ENCODE measurements at regions of chr6 and their contacts with region 1.

Region 1: GRCh38 chr6:26122793-26123674 is 35.8 kb downstream of the HFE start:
- DNase-seq: peak; percentile 90 to 99 (median 97)
- H3K4me3 ChIP-seq: peak overlapping the region; percentile 87 to 100 (median 97)
- H3K4me3 Mint-ChIP-seq: peak overlapping the region; percentile 99
- H3K27ac ChIP-seq: peak overlapping the region; percentile 85 to 87
- H3K27ac Mint-ChIP-seq: peak overlapping the region; percentile 97 to 100 (median 99)
- H3K4me1 ChIP-seq: peaks cover 24 to 41% of the 10 kb centered on the region in 2 donors
- H3K4me1 Mint-ChIP-seq: peaks cover 46% of the 10 kb centered on the region
- H3K27me3 ChIP-seq: no peaks in the 10 kb centered on the region
- H3K27me3 Mint-ChIP-seq: peaks cover 0 to 4% (median 0%) of the 10 kb centered on the region in 3 donors
- CTCF ChIP-seq: no peak

Region 2: DNA sequence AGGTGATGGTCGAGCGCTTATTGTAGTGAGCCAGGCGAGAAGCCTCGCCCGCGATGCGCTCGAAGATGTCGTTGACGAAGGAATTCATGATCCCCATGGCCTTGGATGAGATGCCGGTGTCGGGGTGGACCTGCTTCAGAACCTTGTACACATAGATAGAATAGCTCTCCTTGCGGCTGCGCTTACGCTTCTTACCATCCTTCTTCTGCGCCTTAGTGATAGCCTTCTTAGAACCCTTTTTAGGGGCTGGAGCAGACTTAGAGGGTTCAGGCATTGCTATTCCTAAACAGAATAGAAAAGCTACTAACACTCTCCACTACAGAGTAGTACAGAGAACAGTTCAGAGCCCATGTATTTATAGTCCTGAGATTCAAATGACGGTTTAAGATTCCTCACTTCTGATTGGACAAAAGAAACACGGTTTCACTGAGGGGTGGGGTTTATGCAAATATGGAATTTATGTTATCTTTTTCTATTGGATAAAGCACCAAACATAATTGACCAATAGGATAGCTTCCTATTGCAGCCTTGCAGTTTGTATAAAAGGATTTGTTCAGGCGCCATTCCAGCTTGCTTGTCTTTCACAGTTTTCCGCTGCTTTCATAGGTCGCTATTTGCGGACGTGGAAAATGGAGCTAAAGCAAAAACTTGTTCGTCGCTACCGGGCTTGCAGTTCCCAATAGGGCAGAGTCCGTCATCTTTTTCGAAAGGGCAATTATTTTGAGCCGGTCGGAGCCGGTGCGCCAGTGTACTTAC is 79.5 kb before region 1 on chr6:
- intact Hi-C with region 1: loop called in 1 of 2 experiments (anchors 5 kb)
- DNase-seq: peak; percentile 92 to 97 (median 92)
- H3K4me3 ChIP-seq: peak overlapping the region; percentile 79 to 99 (median 80)
- H3K4me3 Mint-ChIP-seq: peak overlapping the region; percentile 87 to 92
- H3K27ac ChIP-seq: peak overlapping the region; percentile 71 to 72
- H3K27ac Mint-ChIP-seq: peak overlapping the region; percentile 91 to 96 (median 95)
- H3K4me1 ChIP-seq: peaks cover 33% of the 10 kb centered on the region in 2 donors
- H3K4me1 Mint-ChIP-seq: peaks cover 20% of the 10 kb centered on the region
- H3K27me3 ChIP-seq: no peaks in the 10 kb centered on the region
- H3K27me3 Mint-ChIP-seq: peaks cover 0 to 5% (median 0%) of the 10 kb centered on the region in 3 donors
- CTCF ChIP-seq: no peak

Region 3: DNA sequence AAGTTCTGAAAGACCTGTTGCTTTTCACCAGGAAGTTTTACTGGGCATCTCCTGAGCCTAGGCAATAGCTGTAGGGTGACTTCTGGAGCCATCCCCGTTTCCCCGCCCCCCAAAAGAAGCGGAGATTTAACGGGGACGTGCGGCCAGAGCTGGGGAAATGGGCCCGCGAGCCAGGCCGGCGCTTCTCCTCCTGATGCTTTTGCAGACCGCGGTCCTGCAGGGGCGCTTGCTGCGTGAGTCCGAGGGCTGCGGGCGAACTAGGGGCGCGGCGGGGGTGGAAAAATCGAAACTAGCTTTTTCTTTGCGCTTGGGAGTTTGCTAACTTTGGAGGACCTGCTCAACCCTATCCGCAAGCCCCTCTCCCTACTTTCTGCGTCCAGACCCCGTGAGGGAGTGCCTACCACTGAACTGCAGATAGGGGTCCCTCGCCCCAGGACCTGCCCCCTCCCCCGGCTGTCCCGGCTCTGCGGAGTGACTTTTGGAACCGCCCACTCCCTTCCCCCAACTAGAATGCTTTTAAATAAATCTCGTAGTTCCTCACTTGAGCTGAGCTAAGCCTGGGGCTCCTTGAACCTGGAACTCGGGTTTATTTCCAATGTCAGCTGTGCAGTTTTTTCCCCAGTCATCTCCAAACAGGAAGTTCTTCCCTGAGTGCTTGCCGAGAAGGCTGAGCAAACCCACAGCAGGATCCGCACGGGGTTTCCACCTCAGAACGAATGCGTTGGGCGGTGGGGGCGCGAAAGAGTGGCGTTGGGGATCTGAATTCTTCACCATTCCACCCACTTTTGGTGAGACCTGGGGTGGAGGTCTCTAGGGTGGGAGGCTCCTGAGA is 35.5 kb before region 1 on chr6 and contains the start of gene HFE:
- intact Hi-C with region 1: no loop called
- DNase-seq: peak; percentile 51 to 80 (median 64)
- H3K4me3 ChIP-seq: peak within 1 kb of the TSS; percentile 62 to 91 (median 70)
- H3K4me3 Mint-ChIP-seq: peak within 1 kb of the TSS; percentile 90 to 91
- H3K27ac ChIP-seq: peak within 1 kb of the TSS; percentile 77 to 85
- H3K27ac Mint-ChIP-seq: peak within 1 kb of the TSS; percentile 82 to 92 (median 88)
- H3K4me1 ChIP-seq: peaks cover 29 to 49% of the 10 kb centered on the region in 2 donors
- H3K4me1 Mint-ChIP-seq: peaks cover 47% of the 10 kb centered on the region
- H3K27me3 ChIP-seq: no peaks in the 10 kb centered on the region
- H3K27me3 Mint-ChIP-seq: peaks cover 0 to 8% (median 7%) of the 10 kb centered on the region in 3 donors
- CTCF ChIP-seq: no peak
- polyA plus RNA-seq, gene HFE: 13.5 to 16.1 (median 14.1) TPM

Region 4: DNA sequence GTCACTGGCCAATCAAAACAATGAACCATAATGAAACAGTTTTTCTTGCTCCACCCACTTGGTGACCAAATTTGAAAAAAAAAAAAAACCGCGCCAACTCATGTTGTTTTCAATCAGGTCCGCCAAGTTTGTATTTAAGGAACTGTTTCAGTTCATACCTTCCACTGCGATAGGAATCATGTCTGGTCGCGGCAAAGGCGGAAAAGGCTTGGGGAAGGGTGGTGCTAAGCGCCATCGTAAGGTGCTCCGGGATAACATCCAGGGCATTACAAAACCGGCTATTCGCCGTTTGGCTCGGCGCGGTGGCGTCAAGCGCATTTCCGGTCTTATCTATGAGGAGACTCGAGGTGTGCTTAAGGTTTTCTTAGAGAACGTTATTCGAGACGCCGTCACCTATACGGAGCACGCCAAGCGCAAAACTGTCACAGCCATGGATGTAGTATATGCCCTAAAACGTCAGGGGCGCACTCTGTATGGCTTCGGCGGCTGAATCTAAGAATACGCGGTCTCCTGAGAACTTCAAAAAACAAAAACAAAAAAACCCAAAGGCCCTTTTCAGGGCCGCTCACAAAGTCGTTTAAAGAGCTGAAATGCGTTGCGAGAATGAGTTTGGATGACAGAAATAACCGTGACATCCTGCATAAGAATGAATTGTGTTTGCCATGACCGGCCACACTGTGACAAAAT is 19.1 kb before region 1 on chr6:
- intact Hi-C with region 1: loop called in 1 of 2 experiments (anchors 1 kb)
- DNase-seq: peak; percentile 85 to 88 (median 87)
- H3K4me3 ChIP-seq: peak overlapping the region; percentile 59 to 89 (median 84)
- H3K4me3 Mint-ChIP-seq: peak overlapping the region; percentile 86 to 87
- H3K27ac ChIP-seq: peak overlapping the region; percentile 80 to 88
- H3K27ac Mint-ChIP-seq: peak overlapping the region; percentile 88 to 96 (median 93)
- H3K4me1 ChIP-seq: peaks cover 13 to 19% of the 10 kb centered on the region in 2 donors
- H3K4me1 Mint-ChIP-seq: peaks cover 15% of the 10 kb centered on the region
- H3K27me3 ChIP-seq: no peaks in the 10 kb centered on the region
- H3K27me3 Mint-ChIP-seq: peaks cover 0 to 3% (median 2%) of the 10 kb centered on the region in 3 donors
- CTCF ChIP-seq: peak; percentile 67

Region 5: GRCh38 chr6:26156076-26156849 is 33.2 kb after region 1 on chr6:
- intact Hi-C with region 1: loop called (anchors 2 to 5 kb)
- DNase-seq: peak; percentile 82 to 89 (median 87)
- H3K4me3 ChIP-seq: peak overlapping the region; percentile 58 to 88 (median 70)
- H3K4me3 Mint-ChIP-seq: peak overlapping the region; percentile 92 to 93
- H3K27ac ChIP-seq: peak overlapping the region; percentile 87 to 88
- H3K27ac Mint-ChIP-seq: peak overlapping the region; percentile 92 to 100 (median 98)
- H3K4me1 ChIP-seq: peaks cover 38 to 40% of the 10 kb centered on the region in 2 donors
- H3K4me1 Mint-ChIP-seq: peaks cover 36% of the 10 kb centered on the region
- H3K27me3 ChIP-seq: no peaks in the 10 kb centered on the region
- H3K27me3 Mint-ChIP-seq: no peaks in the 10 kb centered on the region
- CTCF ChIP-seq: no peak

Region 6: GRCh38 chr6:26196846-26197648 is 74.0 kb after region 1 on chr6:
- intact Hi-C with region 1: loop called in 1 of 2 experiments (anchors 10 kb)
- DNase-seq: peak; percentile 85 to 87 (median 87)
- H3K4me3 ChIP-seq: peak overlapping the region; percentile 53 to 93 (median 64)
- H3K4me3 Mint-ChIP-seq: peak overlapping the region; percentile 94 to 98
- H3K27ac ChIP-seq: peak overlapping the region; percentile 81 to 88
- H3K27ac Mint-ChIP-seq: peak overlapping the region; percentile 92 to 98 (median 96)
- H3K4me1 ChIP-seq: peaks cover 37 to 55% of the 10 kb centered on the region in 2 donors
- H3K4me1 Mint-ChIP-seq: peaks cover 34% of the 10 kb centered on the region
- H3K27me3 ChIP-seq: no peaks in the 10 kb centered on the region
- H3K27me3 Mint-ChIP-seq: no peaks in the 10 kb centered on the region
- CTCF ChIP-seq: no peak

Region 7: DNA sequence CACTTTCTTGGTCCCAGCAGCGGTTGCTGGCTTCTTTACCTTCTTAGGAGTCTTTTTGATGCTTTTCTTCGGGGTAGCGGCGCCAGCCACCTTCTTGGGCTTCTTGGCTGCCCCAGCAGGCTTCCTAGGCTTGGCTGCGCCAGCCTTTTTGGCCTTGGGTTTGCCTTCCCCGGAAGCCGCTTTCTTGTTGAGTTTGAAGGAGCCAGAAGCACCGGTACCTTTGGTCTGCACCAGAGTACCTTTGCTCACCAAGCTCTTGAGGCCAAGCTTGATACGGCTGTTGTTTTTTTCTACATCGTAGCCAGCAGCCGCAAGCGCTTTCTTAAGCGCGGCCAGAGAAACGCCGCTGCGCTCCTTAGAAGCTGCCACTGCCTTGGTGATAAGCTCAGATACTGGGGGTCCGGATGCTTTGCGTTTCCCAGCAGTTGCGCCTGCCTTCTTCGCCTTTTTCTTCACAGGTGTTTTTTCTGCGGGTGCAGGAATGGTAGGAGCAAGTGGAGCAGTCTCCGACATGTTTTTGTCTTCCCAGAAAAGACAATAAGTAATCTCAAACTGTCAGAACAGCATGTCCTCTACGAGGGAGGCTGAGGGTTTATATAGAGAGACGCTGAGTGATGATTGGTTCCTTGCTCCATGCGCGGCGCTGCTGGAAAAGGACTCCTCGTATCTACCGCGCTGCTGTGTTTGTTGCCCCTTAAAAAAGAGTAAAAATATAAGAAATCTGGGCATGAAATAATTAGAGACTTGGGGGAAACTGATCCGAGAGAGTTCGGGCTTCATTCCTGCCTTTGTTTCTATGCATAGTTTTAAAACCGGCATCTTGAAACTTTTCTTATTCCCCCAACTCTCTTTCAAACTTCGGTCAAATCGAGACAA is 111.6 kb after region 1 on chr6:
- intact Hi-C with region 1: no loop called
- DNase-seq: peak; percentile 43 to 46 (median 45)
- H3K4me3 ChIP-seq: peak overlapping the region; percentile 62 to 92 (median 62)
- H3K4me3 Mint-ChIP-seq: peak overlapping the region; percentile 86 to 96
- H3K27ac ChIP-seq: peak overlapping the region; percentile 82 to 86
- H3K27ac Mint-ChIP-seq: peak overlapping the region; percentile 83 to 93 (median 92)
- H3K4me1 ChIP-seq: peaks cover 41 to 55% of the 10 kb centered on the region in 2 donors
- H3K4me1 Mint-ChIP-seq: peaks cover 41% of the 10 kb centered on the region
- H3K27me3 ChIP-seq: no peaks in the 10 kb centered on the region
- H3K27me3 Mint-ChIP-seq: no peaks in the 10 kb centered on the region
- CTCF ChIP-seq: no peak

Region 8: GRCh38 chr6:26285143-26286134 is 162.4 kb after region 1 on chr6:
- intact Hi-C with region 1: loop called in 1 of 2 experiments (anchors 5 kb)
- DNase-seq: peak; percentile 95 to 97 (median 96)
- H3K4me3 ChIP-seq: peak overlapping the region; percentile 69 to 97 (median 84)
- H3K4me3 Mint-ChIP-seq: peak overlapping the region; percentile 82 to 95
- H3K27ac ChIP-seq: peak overlapping the region; percentile 88 to 97
- H3K27ac Mint-ChIP-seq: peak overlapping the region; percentile 97 to 99 (median 98)
- H3K4me1 ChIP-seq: peaks cover 14 to 16% of the 10 kb centered on the region in 2 donors
- H3K4me1 Mint-ChIP-seq: peaks cover 23% of the 10 kb centered on the region
- H3K27me3 ChIP-seq: no peaks in the 10 kb centered on the region
- H3K27me3 Mint-ChIP-seq: peaks cover 0 to 2% (median 2%) of the 10 kb centered on the region in 3 donors
- CTCF ChIP-seq: no peak